AG04449 (cell line): ENCODE measurements at regions of chrX and their contacts with region 1.

Region 1: GRCh38 chrX:151151665-151152267 is 24.6 kb upstream of the GPR50 start:
- DNase-seq: no peak
- H3K4me3 ChIP-seq: no peak overlapping the region
- CTCF ChIP-seq: peak; percentile 58

Region 2: GRCh38 chrX:151169783-151170182 is 18.0 kb after region 1 on chrX:
- CTCF ChIA-PET with region 1: no interaction called
- POLR2A ChIA-PET with region 1: no interaction called
- DNase-seq: no peak
- H3K4me3 ChIP-seq: no peak overlapping the region
- CTCF ChIP-seq: no peak

Region 3: GRCh38 chrX:151722241-151722846 is 570.6 kb after region 1 on chrX:
- CTCF ChIA-PET with region 1: interaction called, 18 read pairs
- POLR2A ChIA-PET with region 1: no interaction called
- DNase-seq: no peak
- H3K4me3 ChIP-seq: no peak overlapping the region
- CTCF ChIP-seq: peak; percentile 65